ENCODE measurements at regions of chr11 and their contacts with region 1.

Region 1: GRCh38 chr11:77547863-77548551 is 41.7 kb upstream of the AQP11 start:
- DNase-seq: peak; percentile 57 to 74
- ATAC-seq: peak; percentile 86 to 89
- H3K4me3 ChIP-seq: no peak overlapping the region
- H3K27ac ChIP-seq: no peak overlapping the region
- H3K4me1 ChIP-seq: no peaks in the 10 kb centered on the region
- CTCF ChIP-seq: peak; percentile 88
- EP300 ChIP-seq: no peak
- POLR2A ChIP-seq: no peak
- RAD21 ChIP-seq: peak; percentile 88 to 89

Region 2: DNA sequence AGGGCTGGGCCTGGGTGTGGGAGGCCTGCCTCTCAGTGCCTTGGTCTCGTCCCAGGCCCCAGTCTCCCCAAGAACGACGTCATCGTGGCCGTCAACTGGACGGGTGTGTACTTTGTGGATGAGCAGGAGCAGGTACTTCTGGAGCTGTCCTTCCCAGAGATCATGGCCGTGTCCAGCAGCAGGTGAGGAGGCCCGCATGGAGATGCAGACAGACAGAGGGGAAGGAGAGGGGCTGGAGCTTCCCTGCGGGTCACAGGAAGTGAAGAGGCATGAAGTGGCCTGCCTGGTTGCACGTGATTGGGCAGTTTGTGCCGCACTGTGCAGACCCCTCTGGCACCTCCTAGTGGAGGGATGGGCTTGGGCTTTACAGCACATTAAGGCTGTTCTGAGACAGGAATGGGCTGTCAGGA is 349.6 kb before region 1 on chr11:
- CTCF ChIA-PET with region 1: interaction called, 59 read pairs
- POLR2A ChIA-PET with region 1: interaction called, 3 read pairs
- DNase-seq: peak; percentile 36 to 53
- ATAC-seq: peak in 1 of 2 experiments; percentile 80; a peak in 3 of 6 replicates
- H3K4me3 ChIP-seq: no peak overlapping the region
- H3K27ac ChIP-seq: no peak overlapping the region
- H3K4me1 ChIP-seq: no peaks in the 10 kb centered on the region
- CTCF ChIP-seq: 0 out of 3 replicates have a peak, but pooled peaks have one; percentile 9
- EP300 ChIP-seq: no peak
- POLR2A ChIP-seq: no peak
- RAD21 ChIP-seq: no peak

Region 3: GRCh38 chr11:77250881-77251640 is 296.9 kb before region 1 on chr11:
- CTCF ChIA-PET with region 1: no interaction called
- POLR2A ChIA-PET with region 1: no interaction called
- DNase-seq: no peak
- ATAC-seq: no peak
- H3K4me3 ChIP-seq: no peak overlapping the region
- H3K27ac ChIP-seq: no peak overlapping the region
- H3K4me1 ChIP-seq: no peaks in the 10 kb centered on the region
- CTCF ChIP-seq: no peak
- EP300 ChIP-seq: no peak
- POLR2A ChIP-seq: no peak
- RAD21 ChIP-seq: no peak

Region 4: DNA sequence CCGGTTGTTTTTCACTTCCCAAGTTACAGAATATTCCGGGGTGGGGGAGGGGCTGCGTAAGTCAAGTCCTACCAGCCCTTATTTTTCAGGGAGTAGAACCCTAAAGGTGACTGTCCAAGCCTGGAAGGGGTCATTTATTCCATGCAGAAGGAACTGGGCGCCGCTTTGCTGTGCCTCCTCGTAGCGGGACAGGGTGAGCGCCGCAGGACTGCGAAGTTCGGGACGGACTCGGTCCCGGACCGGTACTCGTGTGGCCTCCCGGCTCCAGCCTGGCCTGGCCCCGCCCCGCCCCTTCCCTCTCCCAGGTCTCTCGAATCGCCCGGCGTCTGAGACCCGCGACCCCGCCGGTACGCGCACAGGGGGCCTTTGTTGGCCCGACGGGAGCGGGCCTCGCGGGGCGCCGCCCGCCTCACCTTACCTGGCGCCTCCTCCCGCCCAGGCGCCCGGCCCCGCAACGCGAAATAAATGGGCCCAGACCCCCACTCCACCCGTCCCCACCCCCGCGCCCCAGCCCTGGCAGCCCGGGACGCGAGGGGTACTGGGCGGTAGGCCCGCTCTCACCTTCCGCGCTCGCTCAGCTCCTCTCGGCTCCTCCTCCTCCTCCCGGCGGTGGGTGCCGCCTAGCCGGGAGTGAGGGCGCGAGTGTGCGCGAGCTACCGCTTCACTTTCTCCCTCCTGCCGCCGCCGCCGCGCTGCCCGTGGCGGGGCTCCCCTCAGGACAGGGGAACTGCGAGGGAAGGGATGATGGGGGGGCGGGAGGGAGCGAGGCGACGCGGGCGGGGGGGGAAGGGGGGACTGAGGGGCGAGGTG is 74.8 kb before region 1 on chr11:
- CTCF ChIA-PET with region 1: interaction called, 10 read pairs
- POLR2A ChIA-PET with region 1: no interaction called
- DNase-seq: peak; percentile 15 to 31
- ATAC-seq: peak; percentile 70 to 86
- H3K4me3 ChIP-seq: peak overlapping the region; percentile 85
- H3K27ac ChIP-seq: peak overlapping the region; percentile 86 to 91
- H3K4me1 ChIP-seq: no peaks in the 10 kb centered on the region
- CTCF ChIP-seq: no peak
- EP300 ChIP-seq: no peak
- POLR2A ChIP-seq: no peak
- RAD21 ChIP-seq: no peak

Region 5: DNA sequence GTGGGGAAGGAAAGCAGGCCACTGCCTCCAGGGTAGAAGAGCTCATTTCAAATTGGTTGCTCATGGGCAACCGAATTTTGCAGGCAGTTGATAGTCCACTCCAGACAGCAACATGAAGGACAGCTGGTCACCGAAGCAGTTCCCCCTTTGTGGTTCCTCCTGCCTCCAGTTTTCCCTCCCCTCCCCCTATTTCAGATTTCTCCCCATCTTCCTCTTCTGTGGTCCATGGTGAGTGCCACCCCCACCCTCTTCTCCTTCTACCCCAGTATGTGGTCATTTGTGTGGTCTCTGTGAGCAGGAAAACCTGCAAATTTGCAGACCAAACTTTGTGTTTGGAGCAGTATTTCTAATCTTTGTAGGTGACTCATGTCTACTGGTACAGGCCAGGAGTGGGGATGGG is 35.9 kb before region 1 on chr11:
- CTCF ChIA-PET with region 1: interaction called, 15 read pairs
- POLR2A ChIA-PET with region 1: no interaction called
- DNase-seq: no peak
- ATAC-seq: no peak
- H3K4me3 ChIP-seq: no peak overlapping the region
- H3K27ac ChIP-seq: no peak overlapping the region
- H3K4me1 ChIP-seq: peaks cover 14% of the 10 kb centered on the region
- CTCF ChIP-seq: no peak
- EP300 ChIP-seq: no peak
- POLR2A ChIP-seq: no peak
- RAD21 ChIP-seq: no peak

Measured in A549 (cell line).